T-cell (primary cell): ENCODE measurements at regions of chr3 and their contacts with region 1.

Region 1: DNA sequence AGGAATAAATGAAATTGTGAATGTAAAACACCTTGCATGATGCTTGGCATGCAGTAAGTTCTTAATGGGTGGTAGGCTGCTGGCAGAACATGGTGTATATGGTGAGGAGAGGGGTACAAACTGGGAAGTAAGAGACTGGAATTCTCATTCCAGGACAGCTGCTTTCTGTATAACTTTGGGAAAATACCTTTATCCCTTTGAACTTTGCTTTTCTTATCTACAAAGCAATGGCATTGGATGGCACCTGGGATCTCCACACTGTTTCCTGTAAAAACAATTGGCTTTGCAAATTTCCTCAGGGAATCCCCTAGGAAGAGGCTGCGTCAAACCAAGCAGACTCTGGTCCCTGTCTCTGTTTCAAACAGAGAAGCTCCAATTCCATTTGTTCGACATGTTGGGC is 100.7 kb upstream of the SLC4A7 start:
- DNase-seq: no peak
- ATAC-seq: no peak
- H3K4me3 ChIP-seq: no peak overlapping the region
- H3K4me3 Mint-ChIP-seq: no peak overlapping the region
- H3K27ac ChIP-seq: no peak overlapping the region
- H3K27ac Mint-ChIP-seq: no peak overlapping the region
- H3K4me1 ChIP-seq: peaks cover 1 to 4% of the 10 kb centered on the region in 2 experiments
- H3K4me1 Mint-ChIP-seq: peaks cover 3 to 4% (median 3%) of the 10 kb centered on the region in 3 donors
- H3K27me3 ChIP-seq: no peaks in the 10 kb centered on the region
- H3K27me3 Mint-ChIP-seq: no peaks in the 10 kb centered on the region

Region 2: GRCh38 chr3:27511724-27512693 is 72.9 kb before region 1 on chr3:
- CTCF ChIA-PET with region 1: no interaction called
- POLR2A ChIA-PET with region 1: interaction called in 1 of 2 experiments, 13 read pairs
- DNase-seq: no peak
- ATAC-seq: no peak
- H3K4me3 ChIP-seq: no peak overlapping the region
- H3K4me3 Mint-ChIP-seq: no peak overlapping the region
- H3K27ac ChIP-seq: no peak overlapping the region
- H3K27ac Mint-ChIP-seq: no peak overlapping the region
- H3K4me1 ChIP-seq: no peaks in the 10 kb centered on the region
- H3K4me1 Mint-ChIP-seq: no peaks in the 10 kb centered on the region
- H3K27me3 ChIP-seq: no peaks in the 10 kb centered on the region
- H3K27me3 Mint-ChIP-seq: no peaks in the 10 kb centered on the region

Region 3: DNA sequence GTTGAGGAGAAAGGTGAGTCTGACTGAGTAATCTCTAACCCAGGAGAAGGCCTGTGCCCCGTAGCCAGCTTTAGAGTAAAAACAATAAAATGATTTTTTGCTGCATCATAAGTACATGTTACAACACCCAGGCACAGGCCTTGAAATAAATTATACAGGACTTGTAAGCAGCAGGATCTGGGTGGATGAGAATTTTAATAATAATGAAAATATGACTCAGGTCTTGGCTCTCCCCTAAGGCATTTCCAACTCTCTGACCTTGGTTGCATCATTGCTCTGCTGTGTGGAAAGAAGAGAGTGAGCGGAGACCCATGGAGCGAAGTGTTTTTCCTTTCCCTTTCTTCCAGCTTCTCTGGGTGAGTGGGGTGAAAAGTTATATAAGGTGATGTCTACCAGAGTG is 92.7 kb after region 1 on chr3:
- CTCF ChIA-PET with region 1: no interaction called
- POLR2A ChIA-PET with region 1: no interaction called
- DNase-seq: no peak
- ATAC-seq: no peak
- H3K4me3 ChIP-seq: no peak overlapping the region
- H3K4me3 Mint-ChIP-seq: no peak overlapping the region
- H3K27ac ChIP-seq: no peak overlapping the region
- H3K27ac Mint-ChIP-seq: no peak overlapping the region
- H3K4me1 ChIP-seq: peaks cover 0 to 7% of the 10 kb centered on the region in 2 experiments
- H3K4me1 Mint-ChIP-seq: peaks cover 7 to 16% (median 9%) of the 10 kb centered on the region in 3 donors
- H3K27me3 ChIP-seq: peaks cover 0 to 2% of the 10 kb centered on the region in 2 experiments
- H3K27me3 Mint-ChIP-seq: peaks cover 3% of the 10 kb centered on the region in 2 donors